T-cell (primary cell): ENCODE measurements at regions of chr16 and their contacts with region 1.

Region 1: DNA sequence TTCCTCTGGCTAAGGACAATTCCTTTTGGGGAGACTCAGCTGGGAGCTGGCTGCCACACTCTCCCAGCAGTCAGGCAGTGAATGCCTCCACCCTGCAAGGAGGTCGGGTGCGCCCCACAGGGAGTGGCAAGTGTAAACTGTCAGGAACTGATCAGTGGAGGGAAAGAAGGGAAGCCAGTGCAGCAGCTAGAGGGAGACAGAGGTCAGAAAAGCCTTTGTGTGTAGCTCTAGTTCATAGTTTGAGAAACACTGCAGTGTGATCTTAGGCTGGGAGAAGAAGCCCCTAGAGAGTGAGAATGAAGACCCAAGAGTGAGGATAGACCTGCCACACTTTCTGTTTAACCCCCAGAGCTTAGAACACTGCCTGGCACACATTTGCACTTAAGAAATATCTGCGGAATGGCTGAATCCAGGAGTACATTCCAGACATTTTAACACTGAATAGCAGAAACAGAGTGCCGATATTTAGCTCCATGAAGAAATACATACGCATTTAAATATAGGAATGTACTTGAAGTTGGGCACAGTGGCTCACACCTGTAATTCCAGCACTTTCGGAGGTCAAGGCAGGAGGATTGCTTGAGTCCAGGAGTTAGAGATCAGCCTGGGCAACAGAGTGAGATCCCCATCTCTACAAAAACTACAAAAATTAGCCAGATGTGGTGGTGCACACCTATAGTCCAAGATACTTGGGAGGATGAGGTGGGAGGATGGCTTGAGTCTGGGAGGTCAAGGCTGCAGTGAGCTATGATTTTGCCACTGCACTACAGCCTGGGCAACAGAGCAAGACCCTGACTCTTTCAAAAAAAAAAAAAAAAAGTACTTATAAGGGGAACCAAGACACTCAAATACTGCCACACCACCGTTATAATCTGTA is 11.1 kb upstream of the SLC5A11 start:
- DNase-seq: no peak
- ATAC-seq: no peak
- H3K4me3 ChIP-seq: no peak overlapping the region
- H3K4me3 Mint-ChIP-seq: no peak overlapping the region
- H3K27ac ChIP-seq: no peak overlapping the region
- H3K27ac Mint-ChIP-seq: no peak overlapping the region
- H3K4me1 ChIP-seq: no peaks in the 10 kb centered on the region
- H3K4me1 Mint-ChIP-seq: no peaks in the 10 kb centered on the region
- H3K27me3 ChIP-seq: no peaks in the 10 kb centered on the region
- H3K27me3 Mint-ChIP-seq: no peaks in the 10 kb centered on the region

Region 2: DNA sequence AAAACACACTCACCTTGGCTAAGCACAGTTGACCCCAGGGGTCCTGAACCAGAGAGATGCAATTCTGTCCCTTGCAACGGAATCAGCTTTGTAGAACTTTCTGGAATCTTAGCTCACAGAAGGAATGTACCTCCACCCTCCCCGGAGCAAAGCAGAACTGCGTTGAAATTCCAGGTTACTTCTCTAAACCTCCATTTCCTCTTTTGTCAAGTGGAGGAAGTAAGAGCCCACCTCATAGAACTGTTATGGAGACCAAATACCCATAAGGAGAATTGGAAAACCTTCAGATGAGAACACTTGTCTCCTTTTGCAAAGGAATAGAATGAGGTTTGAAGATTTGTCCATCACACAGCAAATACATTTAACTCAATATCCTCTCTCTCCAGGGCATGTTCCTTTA is 382.0 kb before region 1 on chr16:
- CTCF ChIA-PET with region 1: no interaction called
- POLR2A ChIA-PET with region 1: no interaction called
- DNase-seq: no peak
- ATAC-seq: no peak
- H3K4me3 ChIP-seq: no peak overlapping the region
- H3K4me3 Mint-ChIP-seq: no peak overlapping the region
- H3K27ac ChIP-seq: no peak overlapping the region
- H3K27ac Mint-ChIP-seq: no peak overlapping the region
- H3K4me1 ChIP-seq: no peaks in the 10 kb centered on the region
- H3K4me1 Mint-ChIP-seq: no peaks in the 10 kb centered on the region
- H3K27me3 ChIP-seq: peaks cover under 1 to 2% of the 10 kb centered on the region in 2 experiments
- H3K27me3 Mint-ChIP-seq: peaks cover 24 to 32% of the 10 kb centered on the region in 2 donors

Region 3: GRCh38 chr16:24748242-24748641 is 86.5 kb before region 1 on chr16:
- CTCF ChIA-PET with region 1: interaction called in 1 of 2 experiments, 11 read pairs
- POLR2A ChIA-PET with region 1: interaction called in 1 of 2 experiments, 4 read pairs
- DNase-seq: no peak
- ATAC-seq: peak in 2 of 4 experiments; percentile 43 to 48
- H3K4me3 ChIP-seq: no peak overlapping the region
- H3K4me3 Mint-ChIP-seq: no peak overlapping the region
- H3K27ac ChIP-seq: no peak overlapping the region
- H3K27ac Mint-ChIP-seq: no peak overlapping the region
- H3K4me1 ChIP-seq: peaks cover 7 to 24% of the 10 kb centered on the region in 2 experiments
- H3K4me1 Mint-ChIP-seq: peaks cover 89 to 92% (median 91%) of the 10 kb centered on the region in 3 donors
- H3K27me3 ChIP-seq: no peaks in the 10 kb centered on the region
- H3K27me3 Mint-ChIP-seq: no peaks in the 10 kb centered on the region